ENCODE measurements at regions of chr18 and their contacts with region 1.

Region 1: DNA sequence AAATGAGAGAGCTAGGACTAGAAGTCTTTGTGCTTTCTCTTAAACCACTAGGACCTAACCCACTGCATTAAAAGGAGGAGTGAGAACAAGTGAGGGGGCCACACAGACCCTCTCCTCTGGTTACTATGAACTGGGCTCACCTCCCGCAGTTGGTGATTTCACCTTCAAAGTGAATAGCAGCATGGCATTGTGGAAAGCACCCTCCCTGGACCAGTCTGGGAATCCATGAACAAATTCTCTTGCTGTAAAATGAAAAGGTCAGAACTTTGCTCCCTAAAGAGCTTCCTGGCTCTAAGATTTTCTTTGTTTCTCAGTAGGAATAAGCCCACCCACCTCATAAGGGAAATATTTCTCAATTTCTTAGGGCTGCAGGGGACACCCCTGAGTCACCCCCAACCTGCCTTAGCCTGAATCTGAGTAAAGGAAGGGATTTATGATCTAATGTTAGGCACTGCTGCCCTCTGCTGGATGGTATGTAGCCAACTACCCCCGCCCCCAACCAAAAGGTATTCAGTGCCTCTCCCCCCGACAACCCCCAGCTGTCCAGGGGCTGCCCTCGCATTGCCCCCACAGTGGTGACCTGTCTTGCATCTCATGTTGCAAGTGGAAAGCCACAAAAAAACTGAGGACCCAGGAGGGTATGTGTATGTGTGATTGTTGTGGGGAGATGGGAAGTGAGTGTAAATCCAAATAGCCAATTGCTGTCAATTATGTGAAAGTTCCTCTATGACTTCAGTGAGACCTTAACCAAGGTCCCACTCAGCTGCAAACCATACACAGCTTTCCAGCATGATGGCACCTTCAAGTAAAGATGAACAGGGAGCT is 230.9 kb upstream of the SLC14A2 start:
- DNase-seq: peak; percentile 78
- ATAC-seq: peak; percentile 45
- H3K4me3 ChIP-seq: no peak overlapping the region
- H3K4me3 Mint-ChIP-seq: no peak overlapping the region
- H3K27ac ChIP-seq: no peak overlapping the region
- H3K27ac Mint-ChIP-seq: no peak overlapping the region
- H3K4me1 ChIP-seq: no peaks in the 10 kb centered on the region
- H3K4me1 Mint-ChIP-seq: peaks cover 4% of the 10 kb centered on the region
- H3K27me3 ChIP-seq: peaks cover 0 to 8% (median 3%) of the 10 kb centered on the region in 4 experiments
- H3K27me3 Mint-ChIP-seq: peaks cover 23% of the 10 kb centered on the region
- CTCF ChIP-seq: peak; percentile 85

Region 2: DNA sequence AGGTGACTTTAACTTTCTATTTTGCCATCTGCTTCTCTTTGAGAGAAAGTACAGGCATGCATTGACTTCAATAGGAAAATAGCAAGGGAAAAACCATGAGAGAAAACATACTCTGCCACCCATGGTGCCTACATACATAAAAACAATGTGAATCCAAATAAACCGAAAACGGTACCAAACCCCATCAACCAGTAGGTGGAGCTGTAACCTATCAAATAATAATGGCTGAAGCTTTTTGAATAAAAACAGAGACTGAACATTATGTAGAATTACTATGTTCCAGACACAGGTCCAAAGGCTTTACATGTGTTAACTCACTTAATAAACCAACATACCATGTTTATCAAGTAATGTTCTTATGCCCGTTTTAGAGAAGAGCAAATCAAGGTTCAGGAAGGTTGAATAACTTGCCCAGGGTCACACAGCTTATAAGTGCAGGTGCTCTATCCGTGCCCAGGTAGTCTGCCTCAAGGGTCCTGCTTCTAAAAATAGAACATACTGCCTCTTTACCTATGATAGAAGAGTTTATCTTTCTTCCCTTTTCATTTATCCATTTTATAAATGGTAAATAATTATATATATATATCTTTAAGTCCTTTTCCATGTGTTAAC is 1813.2 kb before region 1 on chr18:
- CTCF ChIA-PET with region 1: interaction called, 25 read pairs
- POLR2A ChIA-PET with region 1: no interaction called
- intact Hi-C with region 1: no loop called
- DNase-seq: peak; percentile 33
- ATAC-seq: no peak
- H3K4me3 ChIP-seq: no peak overlapping the region
- H3K4me3 Mint-ChIP-seq: no peak overlapping the region
- H3K27ac ChIP-seq: no peak overlapping the region
- H3K27ac Mint-ChIP-seq: no peak overlapping the region
- H3K4me1 ChIP-seq: no peaks in the 10 kb centered on the region
- H3K4me1 Mint-ChIP-seq: no peaks in the 10 kb centered on the region
- H3K27me3 ChIP-seq: no peaks in the 10 kb centered on the region
- H3K27me3 Mint-ChIP-seq: no peaks in the 10 kb centered on the region
- CTCF ChIP-seq: peak; percentile 74

Region 3: GRCh38 chr18:43620936-43621335 is 1763.4 kb before region 1 on chr18:
- CTCF ChIA-PET with region 1: interaction called, 191 read pairs
- POLR2A ChIA-PET with region 1: no interaction called
- intact Hi-C with region 1: no loop called
- DNase-seq: peak; percentile 50
- ATAC-seq: peak; percentile 45
- H3K4me3 ChIP-seq: no peak overlapping the region
- H3K4me3 Mint-ChIP-seq: no peak overlapping the region
- H3K27ac ChIP-seq: no peak overlapping the region
- H3K27ac Mint-ChIP-seq: no peak overlapping the region
- H3K4me1 ChIP-seq: no peaks in the 10 kb centered on the region
- H3K4me1 Mint-ChIP-seq: no peaks in the 10 kb centered on the region
- H3K27me3 ChIP-seq: no peaks in the 10 kb centered on the region
- H3K27me3 Mint-ChIP-seq: peaks cover 14% of the 10 kb centered on the region
- CTCF ChIP-seq: peak; percentile 74

Region 4: GRCh38 chr18:44130376-44130942 is 1253.9 kb before region 1 on chr18:
- CTCF ChIA-PET with region 1: interaction called, 20 read pairs
- POLR2A ChIA-PET with region 1: interaction called, 3 read pairs
- intact Hi-C with region 1: no loop called
- DNase-seq: peak; percentile 62
- ATAC-seq: no peak
- H3K4me3 ChIP-seq: no peak overlapping the region
- H3K4me3 Mint-ChIP-seq: no peak overlapping the region
- H3K27ac ChIP-seq: no peak overlapping the region
- H3K27ac Mint-ChIP-seq: no peak overlapping the region
- H3K4me1 ChIP-seq: no peaks in the 10 kb centered on the region
- H3K4me1 Mint-ChIP-seq: peaks cover 7% of the 10 kb centered on the region
- H3K27me3 ChIP-seq: no peaks in the 10 kb centered on the region
- H3K27me3 Mint-ChIP-seq: peaks cover 4% of the 10 kb centered on the region
- CTCF ChIP-seq: peak; percentile 65

Region 5: DNA sequence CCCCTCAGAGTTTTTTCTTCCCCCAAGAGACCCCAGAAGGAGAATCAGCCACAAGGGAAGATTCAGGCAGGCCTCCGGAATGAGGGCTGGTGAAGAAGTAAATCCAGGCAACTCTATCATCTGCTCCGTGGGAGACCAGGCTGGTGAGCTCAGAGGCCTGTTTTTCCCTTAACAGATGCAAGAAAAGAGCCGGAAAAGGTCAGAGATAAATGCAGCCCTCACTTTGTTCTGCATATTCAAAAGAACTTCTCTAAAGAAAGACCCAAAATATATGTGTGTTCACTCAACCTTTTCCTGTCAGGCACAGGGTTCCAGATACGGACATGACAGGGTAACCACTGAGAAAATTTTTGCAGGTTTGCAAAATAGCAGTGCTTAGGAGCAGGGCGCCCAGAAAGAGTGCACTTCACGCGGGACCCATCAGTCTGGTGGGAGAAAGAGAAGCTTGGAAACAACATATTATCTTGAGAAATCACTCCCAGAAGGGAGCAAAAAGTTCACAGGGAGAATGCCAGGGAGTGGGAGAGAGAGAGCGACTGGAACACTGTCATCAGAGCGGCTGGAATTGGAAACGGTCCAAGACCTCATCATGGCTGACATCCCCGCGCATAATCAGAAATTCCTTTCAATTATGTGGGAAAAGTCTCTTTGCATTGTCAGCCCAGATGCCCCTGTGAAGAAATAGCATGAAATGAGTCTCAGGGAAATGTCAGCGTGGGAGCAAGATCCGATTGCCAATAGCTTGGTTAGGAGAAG is 13.9 kb before region 1 on chr18:
- CTCF ChIA-PET with region 1: interaction called, 12 read pairs
- POLR2A ChIA-PET with region 1: no interaction called
- intact Hi-C with region 1: no loop called
- DNase-seq: no peak
- ATAC-seq: no peak
- H3K4me3 ChIP-seq: no peak overlapping the region
- H3K4me3 Mint-ChIP-seq: peak overlapping the region; percentile 10
- H3K27ac ChIP-seq: peak overlapping the region in 1 of 2 donors; percentile 45
- H3K27ac Mint-ChIP-seq: no peak overlapping the region
- H3K4me1 ChIP-seq: peaks cover 21 to 25% of the 10 kb centered on the region in 2 donors
- H3K4me1 Mint-ChIP-seq: peaks cover 29% of the 10 kb centered on the region
- H3K27me3 ChIP-seq: no peaks in the 10 kb centered on the region
- H3K27me3 Mint-ChIP-seq: no peaks in the 10 kb centered on the region
- CTCF ChIP-seq: no peak

Region 6: GRCh38 chr18:45416168-45416567 is 31.8 kb after region 1 on chr18:
- CTCF ChIA-PET with region 1: no interaction called
- POLR2A ChIA-PET with region 1: no interaction called
- intact Hi-C with region 1: no loop called
- DNase-seq: no peak
- ATAC-seq: no peak
- H3K4me3 ChIP-seq: no peak overlapping the region
- H3K4me3 Mint-ChIP-seq: no peak overlapping the region
- H3K27ac ChIP-seq: no peak overlapping the region
- H3K27ac Mint-ChIP-seq: no peak overlapping the region
- H3K4me1 ChIP-seq: no peaks in the 10 kb centered on the region
- H3K4me1 Mint-ChIP-seq: no peaks in the 10 kb centered on the region
- H3K27me3 ChIP-seq: no peaks in the 10 kb centered on the region
- H3K27me3 Mint-ChIP-seq: peaks cover 23% of the 10 kb centered on the region
- CTCF ChIP-seq: no peak